ENCODE measurements at regions of chr9 and their contacts with region 1.

Region 1: GRCh38 chr9:136944519-136945279 is at the starts of genes C8G and FBXW5:
- DNase-seq: peak; percentile 89 to 91
- ATAC-seq: peak; percentile 34 to 47
- H3K4me3 ChIP-seq: peak within 1 kb of the TSS; percentile 78
- H3K27ac ChIP-seq: peak within 1 kb of the TSS; percentile 98 to 99
- H3K4me1 ChIP-seq: peaks cover 36% of the 10 kb centered on the region
- CTCF ChIP-seq: peak; percentile 94
- EP300 ChIP-seq: no peak; a peak in 1 of 5 replicates
- POLR2A ChIP-seq: peak; percentile 60
- RAD21 ChIP-seq: peak; percentile 21 to 40; a peak in 3 of 5 replicates
- polyA plus RNA-seq, gene C8G: 0.41 and 0.45 TPM in 2 replicates
- polyA plus RNA-seq, gene FBXW5: 37.3 and 37.5 TPM in 2 replicates

Region 2: GRCh38 chr9:136512651-136513071 is 432.0 kb before region 1 on chr9:
- CTCF ChIA-PET with region 1: no interaction called
- POLR2A ChIA-PET with region 1: no interaction called
- DNase-seq: peak in 1 of 2 experiments; percentile 44
- ATAC-seq: peak; percentile 9 to 51; a peak in 3 of 6 replicates
- H3K4me3 ChIP-seq: no peak overlapping the region
- H3K27ac ChIP-seq: no peak overlapping the region
- H3K4me1 ChIP-seq: no peaks in the 10 kb centered on the region
- CTCF ChIP-seq: no peak
- EP300 ChIP-seq: no peak
- POLR2A ChIP-seq: no peak
- RAD21 ChIP-seq: no peak

Region 3: GRCh38 chr9:136858844-136859757 is 85.6 kb before region 1 on chr9:
- CTCF ChIA-PET with region 1: interaction called, 11 read pairs
- POLR2A ChIA-PET with region 1: no interaction called
- DNase-seq: peak in 1 of 2 experiments; percentile 50
- ATAC-seq: peak; percentile 27 to 64
- H3K4me3 ChIP-seq: no peak overlapping the region
- H3K27ac ChIP-seq: peak overlapping the region; percentile 79 to 89
- H3K4me1 ChIP-seq: peaks cover 73% of the 10 kb centered on the region
- CTCF ChIP-seq: no peak
- EP300 ChIP-seq: no peak
- POLR2A ChIP-seq: 0 out of 2 replicates have a peak, but pooled peaks have one; percentile 2
- RAD21 ChIP-seq: no peak

Region 4: DNA sequence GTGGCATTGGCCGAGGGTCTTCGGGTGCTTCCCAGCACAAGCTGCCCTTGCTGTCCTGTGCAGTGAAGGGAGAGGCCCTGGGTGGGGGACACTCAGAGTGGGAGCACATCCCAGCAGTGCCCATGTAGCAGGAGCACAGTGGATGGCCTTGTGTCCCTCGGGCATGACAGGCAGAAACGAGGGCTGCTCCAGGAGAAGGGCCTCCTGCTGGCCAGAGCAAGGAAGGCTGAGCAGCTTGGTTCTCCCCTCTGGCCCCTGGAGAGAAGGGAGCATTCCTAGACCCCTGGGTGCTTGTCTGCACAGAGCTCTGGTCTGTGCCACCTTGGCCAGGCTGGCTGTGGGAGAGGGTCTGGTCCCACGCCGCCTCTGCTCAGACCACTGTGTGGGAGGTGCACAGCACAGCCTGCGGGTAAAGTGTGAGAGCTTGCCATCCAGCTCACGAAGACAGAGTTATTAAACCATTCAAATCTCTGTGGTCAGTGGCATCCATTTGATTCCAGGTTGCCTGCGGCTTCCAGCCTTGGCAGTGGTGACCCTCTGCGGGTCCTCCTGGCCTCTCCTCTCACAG is 18.5 kb before region 1 on chr9:
- CTCF ChIA-PET with region 1: interaction called, 10 read pairs
- POLR2A ChIA-PET with region 1: no interaction called
- DNase-seq: no peak
- ATAC-seq: peak; percentile 66 to 83
- H3K4me3 ChIP-seq: no peak overlapping the region
- H3K27ac ChIP-seq: peak overlapping the region in 1 of 2 experiments; percentile 54; a peak in 2 of 6 replicates
- H3K4me1 ChIP-seq: peaks cover 6% of the 10 kb centered on the region; the same call in 1 of the 3 replicates
- CTCF ChIP-seq: 0 out of 3 replicates have a peak, but pooled peaks have one; percentile 12
- EP300 ChIP-seq: no peak
- POLR2A ChIP-seq: no peak
- RAD21 ChIP-seq: 0 out of 5 replicates have a peak, but pooled peaks of 1 of the 2 experiments have one; percentile 14

Region 5: DNA sequence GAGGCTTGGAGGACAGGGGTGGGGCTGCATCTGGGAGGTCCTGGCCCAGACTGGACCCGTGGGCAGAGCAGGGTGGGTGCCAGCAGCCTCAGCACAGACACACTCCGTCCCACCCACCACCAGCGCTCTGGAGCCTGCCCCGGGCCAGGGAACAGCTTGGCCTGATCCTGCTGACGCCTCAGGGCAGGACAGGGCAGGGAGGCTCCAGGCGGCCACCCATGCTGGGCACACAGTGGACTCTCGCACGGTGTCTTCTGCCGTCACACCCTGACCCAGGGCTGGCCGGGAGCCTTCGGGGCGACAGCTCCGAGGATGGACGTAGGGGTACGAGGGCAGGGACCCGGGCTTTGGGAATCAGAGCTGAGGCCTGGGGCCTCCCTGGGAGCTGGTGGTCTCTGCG is 24.5 kb after region 1 on chr9:
- CTCF ChIA-PET with region 1: interaction called, 64 read pairs
- POLR2A ChIA-PET with region 1: no interaction called
- DNase-seq: no peak
- ATAC-seq: peak in 1 of 2 experiments; percentile 15; a peak in 2 of 6 replicates
- H3K4me3 ChIP-seq: no peak overlapping the region
- H3K27ac ChIP-seq: no peak overlapping the region
- H3K4me1 ChIP-seq: peaks cover 9% of the 10 kb centered on the region; the same call in 2 of the 3 replicates
- CTCF ChIP-seq: no peak
- EP300 ChIP-seq: no peak
- POLR2A ChIP-seq: no peak
- RAD21 ChIP-seq: no peak

Region 6: GRCh38 chr9:136991993-136992818 is 47.5 kb after region 1 on chr9 and contains the start of gene PAXX:
- CTCF ChIA-PET with region 1: interaction called, 16 read pairs
- POLR2A ChIA-PET with region 1: interaction called, 16 read pairs
- DNase-seq: peak; percentile 88 to 94
- ATAC-seq: peak; percentile 74 to 82
- H3K4me3 ChIP-seq: peak within 1 kb of the TSS; percentile 89
- H3K27ac ChIP-seq: peak within 1 kb of the TSS; percentile 91 to 97
- H3K4me1 ChIP-seq: peaks cover 45% of the 10 kb centered on the region
- CTCF ChIP-seq: no peak
- EP300 ChIP-seq: no peak
- POLR2A ChIP-seq: peak; percentile 65
- RAD21 ChIP-seq: no peak
- polyA plus RNA-seq, gene PAXX: 12.6 and 15.6 TPM in 2 replicates

Region 7: DNA sequence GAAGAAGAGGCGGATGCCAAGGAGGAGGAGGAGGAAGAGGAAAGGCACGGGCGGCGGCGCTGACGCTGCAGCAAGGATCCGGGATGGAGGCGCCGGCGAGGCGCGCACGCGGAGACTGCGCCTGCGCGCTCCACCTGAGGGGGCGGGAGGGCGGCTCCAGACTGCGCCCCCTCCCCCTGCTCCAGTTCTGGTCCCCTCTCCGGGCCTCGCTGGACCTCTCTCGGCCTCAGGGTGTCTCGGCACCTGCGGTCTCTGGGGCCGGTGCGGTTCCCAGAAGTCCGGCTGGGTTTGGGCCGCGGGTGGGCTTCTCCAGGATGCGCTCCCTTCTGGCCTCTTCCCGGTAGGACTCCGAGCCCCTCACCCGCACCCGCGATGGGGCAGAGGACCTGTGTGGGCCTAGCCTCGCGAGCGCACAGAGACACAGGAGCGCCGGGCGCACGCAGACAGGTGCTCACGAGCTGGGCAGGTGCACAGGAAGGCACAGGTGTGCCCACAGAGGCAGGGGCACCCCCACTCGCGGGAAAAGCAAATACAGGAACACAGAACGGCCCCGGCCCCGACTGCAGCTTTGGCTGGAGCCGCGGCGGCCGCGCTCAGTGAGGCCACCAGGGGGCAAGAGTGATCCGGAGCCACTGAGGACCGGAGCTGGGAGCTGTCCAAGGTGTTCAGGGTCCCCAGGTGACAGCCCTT is 101.5 kb after region 1 on chr9 and contains the start of gene NPDC1:
- CTCF ChIA-PET with region 1: interaction called, 282 read pairs
- POLR2A ChIA-PET with region 1: no interaction called
- DNase-seq: peak; percentile 83 to 94
- ATAC-seq: peak; percentile 68 to 76
- H3K4me3 ChIP-seq: peak within 1 kb of the TSS; percentile 71
- H3K27ac ChIP-seq: peak within 1 kb of the TSS; percentile 77 to 92
- H3K4me1 ChIP-seq: peaks cover 15% of the 10 kb centered on the region
- CTCF ChIP-seq: peak; percentile 70
- EP300 ChIP-seq: no peak
- POLR2A ChIP-seq: peak; percentile 60
- RAD21 ChIP-seq: peak; percentile 71 to 77
- polyA plus RNA-seq, gene NPDC1: 12.7 and 13.0 TPM in 2 replicates

Region 8: DNA sequence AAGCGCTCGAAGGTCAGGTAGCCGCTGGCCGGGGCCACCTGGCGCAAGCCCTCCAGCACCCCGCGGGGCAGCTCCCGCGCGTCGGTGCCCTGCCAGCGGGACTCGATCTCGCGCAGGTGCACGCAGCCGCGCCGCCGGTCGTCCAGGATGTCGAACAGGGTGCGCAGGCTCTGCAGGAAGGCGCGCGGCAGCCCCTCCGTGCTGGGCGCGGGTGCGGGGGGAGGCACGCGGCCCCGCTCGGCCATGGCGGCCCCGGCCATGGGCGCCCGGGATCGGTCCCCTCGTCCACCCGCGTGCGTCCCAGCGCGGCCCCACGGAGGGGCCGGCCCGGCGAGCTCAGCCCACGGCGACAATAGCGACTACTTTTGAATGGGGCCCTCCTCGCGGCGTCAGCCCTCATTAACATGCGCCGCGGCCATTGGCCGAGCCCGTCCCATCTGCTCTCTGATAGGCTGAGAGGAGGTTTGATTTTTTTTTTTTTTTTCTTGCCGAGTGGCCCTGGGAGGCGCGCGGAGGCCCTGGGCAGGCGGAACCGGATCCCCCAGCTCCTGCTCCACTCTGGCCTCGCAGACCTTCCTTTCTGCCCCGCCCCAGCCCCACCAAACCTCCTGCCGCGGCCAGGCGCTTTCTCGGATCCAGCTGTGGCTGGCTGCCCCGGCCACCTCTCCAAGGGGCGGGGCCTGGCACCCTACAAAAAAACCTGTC is 125.7 kb after region 1 on chr9 and contains the start of gene SAPCD2:
- CTCF ChIA-PET with region 1: interaction called, 22 read pairs
- POLR2A ChIA-PET with region 1: no interaction called
- DNase-seq: peak; percentile 86 to 88
- ATAC-seq: peak; percentile 73 to 89
- H3K4me3 ChIP-seq: peak within 1 kb of the TSS; percentile 52
- H3K27ac ChIP-seq: peak within 1 kb of the TSS; percentile 68 to 88
- H3K4me1 ChIP-seq: peaks cover 27% of the 10 kb centered on the region
- CTCF ChIP-seq: no peak; the same call in 2 of the 3 replicates
- EP300 ChIP-seq: no peak
- POLR2A ChIP-seq: peak; percentile 29; the same call in 1 of the 2 replicates
- RAD21 ChIP-seq: no peak
- polyA plus RNA-seq, gene SAPCD2: 6.5 and 6.9 TPM in 2 replicates

Region 9: DNA sequence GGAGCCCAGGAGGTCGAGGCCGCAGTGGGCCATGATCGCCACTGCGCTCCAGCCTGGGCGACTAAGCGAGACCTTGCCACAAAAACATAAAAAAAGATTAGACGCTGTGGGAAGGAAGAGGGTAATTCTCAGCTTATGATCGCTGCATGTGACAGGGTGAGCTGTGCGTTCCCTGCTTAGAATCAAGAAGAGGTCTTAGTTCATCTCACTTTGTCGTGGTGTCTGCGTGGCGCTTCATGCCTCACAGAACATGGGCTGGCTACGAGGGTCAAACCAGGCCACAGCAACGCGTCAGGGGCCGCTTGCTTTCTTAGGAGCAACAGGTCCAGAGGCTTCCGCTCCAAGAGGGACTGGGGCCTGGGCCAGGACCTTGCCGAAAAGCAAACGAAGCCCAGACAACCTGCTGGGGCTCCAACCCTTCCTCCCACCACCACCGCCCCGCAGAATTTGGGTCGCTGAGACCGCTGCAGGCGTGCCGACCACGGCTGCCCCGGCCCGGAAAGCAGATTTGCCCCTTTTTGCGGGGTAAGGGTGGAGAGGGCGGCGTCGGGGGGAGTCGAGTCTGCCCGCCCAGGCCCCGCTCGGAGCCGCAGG is 184.3 kb after region 1 on chr9:
- CTCF ChIA-PET with region 1: no interaction called
- POLR2A ChIA-PET with region 1: no interaction called
- DNase-seq: peak in 1 of 2 experiments; percentile 51
- ATAC-seq: peak; percentile 12 to 13; a peak in 4 of 6 replicates
- H3K4me3 ChIP-seq: peak overlapping the region; percentile 94
- H3K27ac ChIP-seq: peak overlapping the region; percentile 98
- H3K4me1 ChIP-seq: peaks cover 17% of the 10 kb centered on the region
- CTCF ChIP-seq: no peak
- EP300 ChIP-seq: no peak
- POLR2A ChIP-seq: no peak
- RAD21 ChIP-seq: no peak

Region 10: GRCh38 chr9:137339045-137339907 is 394.6 kb after region 1 on chr9:
- CTCF ChIA-PET with region 1: no interaction called
- POLR2A ChIA-PET with region 1: no interaction called
- DNase-seq: no peak
- ATAC-seq: no peak
- H3K4me3 ChIP-seq: no peak overlapping the region
- H3K27ac ChIP-seq: no peak overlapping the region
- H3K4me1 ChIP-seq: no peaks in the 10 kb centered on the region
- CTCF ChIP-seq: no peak
- EP300 ChIP-seq: no peak
- POLR2A ChIP-seq: no peak
- RAD21 ChIP-seq: no peak

Measured in A549 (cell line).